ENCODE measurements at regions of chr4 and their contacts with region 1.

Region 1: DNA sequence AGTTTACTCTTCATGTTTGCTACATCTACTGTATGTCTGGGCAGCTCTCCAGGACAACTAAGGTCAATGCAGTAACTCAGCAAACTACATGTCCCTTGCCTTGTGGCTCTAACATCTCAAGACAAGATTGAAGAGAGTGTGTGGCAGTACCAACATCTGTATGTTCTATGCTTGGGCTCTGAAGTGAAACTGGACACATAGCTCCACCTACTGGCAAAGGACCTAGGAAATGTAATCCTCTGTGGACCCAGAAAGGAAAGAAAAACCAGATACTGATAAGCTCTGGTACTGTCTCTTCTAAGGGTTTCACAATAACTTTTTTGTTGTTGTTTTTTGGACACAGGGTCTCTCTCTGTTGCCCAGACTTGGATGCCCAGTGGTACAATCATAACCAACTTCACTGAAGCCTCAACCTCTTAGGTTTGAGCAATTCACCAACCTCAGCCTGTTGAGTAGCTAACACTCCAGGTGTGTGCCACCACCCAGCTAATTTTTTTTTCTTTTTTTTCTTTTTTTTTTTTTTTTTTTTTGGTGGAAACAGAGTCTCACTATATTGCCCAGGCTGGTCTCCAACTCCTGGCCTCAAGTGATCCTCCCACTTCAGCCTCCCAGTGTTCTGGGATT is 64.1 kb downstream of the QDPR start:
- DNase-seq: peak in 1 of 2 donors; percentile 80
- ATAC-seq: peak; percentile 66 to 92 (median 82)
- H3K4me3 ChIP-seq: no peak overlapping the region
- H3K4me3 Mint-ChIP-seq: no peak overlapping the region
- H3K27ac ChIP-seq: no peak overlapping the region
- H3K27ac Mint-ChIP-seq: no peak overlapping the region
- H3K4me1 ChIP-seq: no peaks in the 10 kb centered on the region
- H3K4me1 Mint-ChIP-seq: peaks cover 4% of the 10 kb centered on the region in 2 donors
- H3K27me3 ChIP-seq: no peaks in the 10 kb centered on the region
- H3K27me3 Mint-ChIP-seq: peaks cover 10 to 12% of the 10 kb centered on the region in 2 donors
- CTCF ChIP-seq: peak; percentile 57

Region 2: DNA sequence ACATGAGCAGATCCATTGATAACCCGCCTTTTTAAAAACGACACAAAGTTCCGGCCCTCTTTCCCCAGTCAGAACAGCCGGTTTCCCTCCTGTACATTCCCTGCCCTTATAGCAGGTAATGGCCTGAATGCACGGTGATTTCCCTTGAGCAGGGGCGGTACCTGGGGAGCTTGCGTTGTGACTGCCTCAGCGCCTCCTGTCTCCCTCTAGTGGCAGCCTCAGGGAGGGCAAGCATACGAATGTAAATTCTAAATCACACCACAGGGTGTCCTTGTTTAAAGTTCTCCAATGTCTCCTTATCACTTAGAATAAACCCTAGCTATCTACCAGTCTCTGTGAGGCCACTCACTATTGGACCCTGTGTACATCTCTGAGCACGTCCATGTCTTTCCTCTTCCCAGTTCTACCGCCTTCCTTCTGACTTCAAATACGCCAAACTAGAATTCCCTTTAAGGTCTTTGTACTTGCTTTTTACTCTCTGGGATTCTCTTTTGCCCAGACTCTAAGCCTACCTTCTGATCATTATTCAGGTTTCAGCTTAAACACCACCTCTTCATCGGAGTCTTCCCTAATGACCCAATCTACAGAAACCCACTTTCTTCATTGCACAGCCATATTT is 531.0 kb before region 1 on chr4:
- intact Hi-C with region 1: loop called (anchors 10 kb)
- DNase-seq: peak; percentile 74 to 82
- ATAC-seq: peak; percentile 93 to 100 (median 100)
- H3K4me3 ChIP-seq: no peak overlapping the region
- H3K4me3 Mint-ChIP-seq: no peak overlapping the region
- H3K27ac ChIP-seq: no peak overlapping the region
- H3K27ac Mint-ChIP-seq: no peak overlapping the region
- H3K4me1 ChIP-seq: no peaks in the 10 kb centered on the region
- H3K4me1 Mint-ChIP-seq: peaks cover 9 to 10% of the 10 kb centered on the region in 2 donors
- H3K27me3 ChIP-seq: no peaks in the 10 kb centered on the region
- H3K27me3 Mint-ChIP-seq: peaks cover 0 to 2% of the 10 kb centered on the region in 2 donors
- CTCF ChIP-seq: peak; percentile 94

Region 3: GRCh38 chr4:17680559-17681280 is 232.9 kb after region 1 on chr4:
- intact Hi-C with region 1: no loop called
- DNase-seq: no peak
- ATAC-seq: no peak
- H3K4me3 ChIP-seq: no peak overlapping the region
- H3K4me3 Mint-ChIP-seq: no peak overlapping the region
- H3K27ac ChIP-seq: no peak overlapping the region
- H3K27ac Mint-ChIP-seq: no peak overlapping the region
- H3K4me1 ChIP-seq: no peaks in the 10 kb centered on the region
- H3K4me1 Mint-ChIP-seq: no peaks in the 10 kb centered on the region
- H3K27me3 ChIP-seq: no peaks in the 10 kb centered on the region
- H3K27me3 Mint-ChIP-seq: peaks cover 6 to 16% of the 10 kb centered on the region in 2 donors
- CTCF ChIP-seq: no peak

Region 4: DNA sequence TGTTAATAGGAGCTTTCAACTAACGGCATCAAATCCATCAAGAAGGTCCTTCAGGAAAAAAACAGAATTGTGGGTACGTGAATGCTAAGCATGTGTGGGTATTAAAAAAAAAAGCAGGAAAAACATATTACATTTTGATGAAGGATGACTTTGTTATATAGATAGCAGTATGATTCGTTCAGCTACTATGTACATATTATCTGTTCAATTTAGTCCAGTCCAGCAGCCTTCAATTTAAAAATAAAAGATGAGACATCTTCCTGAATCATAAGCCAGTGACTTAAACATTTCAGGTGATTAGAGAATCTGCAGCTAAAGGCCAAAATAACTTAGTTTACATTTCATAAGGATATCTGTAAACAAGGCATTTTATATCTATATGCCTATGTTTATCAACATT is 510.4 kb after region 1 on chr4:
- intact Hi-C with region 1: no loop called
- DNase-seq: no peak
- ATAC-seq: no peak
- H3K4me3 ChIP-seq: no peak overlapping the region
- H3K4me3 Mint-ChIP-seq: no peak overlapping the region
- H3K27ac ChIP-seq: no peak overlapping the region
- H3K27ac Mint-ChIP-seq: no peak overlapping the region
- H3K4me1 ChIP-seq: no peaks in the 10 kb centered on the region
- H3K4me1 Mint-ChIP-seq: peaks cover 0 to 10% of the 10 kb centered on the region in 2 donors
- H3K27me3 ChIP-seq: no peaks in the 10 kb centered on the region
- H3K27me3 Mint-ChIP-seq: no peaks in the 10 kb centered on the region
- CTCF ChIP-seq: no peak

Measured in natural killer cell (primary cell).